ENCODE measurements at regions of chr18 and their contacts with region 1.

Region 1: DNA sequence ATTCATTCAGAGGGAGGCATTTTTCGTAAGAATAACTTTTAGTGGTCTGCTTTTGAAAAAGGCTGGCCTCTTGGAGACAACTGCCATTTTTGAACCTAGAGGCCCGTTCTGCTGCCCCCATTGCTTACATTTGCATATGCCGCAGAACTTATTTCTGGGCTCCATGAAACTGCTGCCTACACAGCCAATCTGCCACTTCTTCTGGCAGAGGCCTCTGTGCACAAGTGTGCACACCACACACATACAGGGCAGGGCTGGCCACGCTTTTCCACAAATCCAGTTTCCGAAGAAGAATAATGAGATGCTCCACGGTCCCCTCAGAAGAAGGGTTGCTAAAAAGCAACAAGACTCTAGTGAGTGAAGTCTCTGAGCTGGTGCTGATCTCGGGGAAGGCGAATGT is 56.2 kb downstream of the TMEM200C start:
- DNase-seq: no peak
- H3K4me3 ChIP-seq: no peak overlapping the region
- H3K27ac ChIP-seq: no peak overlapping the region
- H3K4me1 ChIP-seq: no peaks in the 10 kb centered on the region
- H3K27me3 ChIP-seq: no peaks in the 10 kb centered on the region
- CTCF ChIP-seq: no peak
- POLR2A ChIP-seq: no peak

Region 2: GRCh38 chr18:5040476-5040875 is 798.6 kb before region 1 on chr18:
- intact Hi-C with region 1: loop called (anchors 5 kb)
- DNase-seq: no peak
- H3K4me3 ChIP-seq: no peak overlapping the region
- H3K27ac ChIP-seq: no peak overlapping the region
- H3K4me1 ChIP-seq: no peaks in the 10 kb centered on the region
- H3K27me3 ChIP-seq: no peaks in the 10 kb centered on the region
- CTCF ChIP-seq: no peak
- POLR2A ChIP-seq: no peak

Region 3: GRCh38 chr18:5771343-5771742 is 67.8 kb before region 1 on chr18:
- intact Hi-C with region 1: no loop called
- DNase-seq: no peak
- H3K4me3 ChIP-seq: no peak overlapping the region
- H3K27ac ChIP-seq: no peak overlapping the region
- H3K4me1 ChIP-seq: no peaks in the 10 kb centered on the region
- H3K27me3 ChIP-seq: peaks cover 0 to 8% of the 10 kb centered on the region in 2 donors
- CTCF ChIP-seq: no peak
- POLR2A ChIP-seq: no peak